ENCODE measurements at regions of chr12 and their contacts with region 1.

Region 1: GRCh38 chr12:53806721-53807120 is 54.9 kb upstream of the CISTR start:
- DNase-seq: no peak
- ATAC-seq: no peak
- H3K4me3 ChIP-seq: no peak overlapping the region
- H3K27ac ChIP-seq: peak overlapping the region in 1 of 2 experiments; percentile 63; a peak in 1 of 6 replicates
- H3K4me1 ChIP-seq: peaks cover 31% of the 10 kb centered on the region
- CTCF ChIP-seq: no peak
- EP300 ChIP-seq: no peak
- POLR2A ChIP-seq: no peak
- RAD21 ChIP-seq: no peak

Region 2: GRCh38 chr12:53712059-53712643 is 94.6 kb before region 1 on chr12:
- CTCF ChIA-PET with region 1: no interaction called
- POLR2A ChIA-PET with region 1: no interaction called
- DNase-seq: no peak
- ATAC-seq: no peak
- H3K4me3 ChIP-seq: no peak overlapping the region
- H3K27ac ChIP-seq: no peak overlapping the region
- H3K4me1 ChIP-seq: no peaks in the 10 kb centered on the region
- CTCF ChIP-seq: no peak
- EP300 ChIP-seq: no peak
- POLR2A ChIP-seq: no peak
- RAD21 ChIP-seq: no peak

Region 3: GRCh38 chr12:53791735-53792326 is 14.9 kb before region 1 on chr12:
- CTCF ChIA-PET with region 1: interaction called, 11 read pairs
- POLR2A ChIA-PET with region 1: no interaction called
- DNase-seq: peak in 1 of 2 experiments; percentile 42
- ATAC-seq: 0 out of 6 replicates have a peak, but pooled peaks of 1 of the 2 experiments have one; percentile 51
- H3K4me3 ChIP-seq: no peak overlapping the region
- H3K27ac ChIP-seq: no peak overlapping the region
- H3K4me1 ChIP-seq: peaks cover 9% of the 10 kb centered on the region; the same call in 1 of the 3 replicates
- CTCF ChIP-seq: peak; percentile 54
- EP300 ChIP-seq: no peak
- POLR2A ChIP-seq: no peak
- RAD21 ChIP-seq: peak; percentile 40 to 53; a peak in 4 of 5 replicates

Region 4: GRCh38 chr12:53829130-53829819 is 22.6 kb after region 1 on chr12:
- CTCF ChIA-PET with region 1: interaction called, 15 read pairs
- POLR2A ChIA-PET with region 1: no interaction called
- DNase-seq: no peak
- ATAC-seq: no peak
- H3K4me3 ChIP-seq: no peak overlapping the region
- H3K27ac ChIP-seq: peak overlapping the region; percentile 42 to 77; a peak in 5 of 6 replicates
- H3K4me1 ChIP-seq: peaks cover 44% of the 10 kb centered on the region
- CTCF ChIP-seq: no peak
- EP300 ChIP-seq: no peak
- POLR2A ChIP-seq: no peak
- RAD21 ChIP-seq: no peak

Region 5: DNA sequence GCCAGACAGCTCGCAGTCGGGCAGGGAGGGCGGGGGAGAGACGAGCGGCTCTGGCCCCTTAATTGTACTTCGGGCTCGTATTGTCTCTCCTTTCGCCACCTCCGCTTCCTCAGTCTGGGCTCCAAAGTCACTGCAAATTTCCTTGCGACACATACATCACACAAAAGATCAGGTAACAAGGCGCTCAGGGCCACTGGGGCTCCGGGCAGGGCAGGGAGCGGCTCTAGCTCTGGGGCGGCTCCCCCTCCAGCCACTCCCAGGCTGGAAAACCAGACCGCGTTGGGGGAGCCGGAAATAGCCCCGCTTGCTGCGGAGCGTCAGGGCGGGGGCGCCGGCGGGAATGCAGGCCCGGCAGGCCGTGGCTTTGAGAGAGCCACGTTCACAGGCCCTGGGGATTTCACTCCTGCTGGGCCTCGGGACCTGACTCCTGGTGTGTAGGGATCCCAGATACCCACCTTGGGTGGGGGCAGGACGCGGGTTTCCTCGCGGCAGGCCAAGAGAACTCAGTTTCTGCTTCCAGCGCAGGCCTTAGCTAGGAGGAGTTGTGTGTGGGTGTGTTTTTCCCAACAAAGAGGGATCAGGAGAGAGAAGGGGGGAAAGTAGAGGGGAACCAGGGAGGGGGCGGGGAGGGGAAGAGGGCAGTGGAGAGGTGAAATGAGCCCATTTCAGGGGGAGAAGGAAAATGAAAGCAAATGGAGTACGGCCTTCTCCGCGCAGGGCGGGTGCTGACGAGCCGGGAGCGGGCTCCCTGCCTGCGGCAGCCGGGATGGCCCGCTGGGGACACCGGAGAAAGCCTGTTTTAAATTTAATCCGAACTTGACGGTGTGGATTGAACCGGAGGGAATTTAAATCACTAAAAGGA is 188.9 kb after region 1 on chr12:
- CTCF ChIA-PET with region 1: no interaction called
- POLR2A ChIA-PET with region 1: no interaction called
- DNase-seq: peak in 1 of 2 experiments; percentile 58
- ATAC-seq: peak; percentile 58 to 67
- H3K4me3 ChIP-seq: peak overlapping the region; percentile 37
- H3K27ac ChIP-seq: peak overlapping the region; percentile 78 to 89
- H3K4me1 ChIP-seq: peaks cover 8% of the 10 kb centered on the region
- CTCF ChIP-seq: no peak
- EP300 ChIP-seq: no peak
- POLR2A ChIP-seq: peak; percentile 44
- RAD21 ChIP-seq: no peak